Calu3 (cell line): ENCODE measurements at regions of chr11 and their contacts with region 1.

Region 1: DNA sequence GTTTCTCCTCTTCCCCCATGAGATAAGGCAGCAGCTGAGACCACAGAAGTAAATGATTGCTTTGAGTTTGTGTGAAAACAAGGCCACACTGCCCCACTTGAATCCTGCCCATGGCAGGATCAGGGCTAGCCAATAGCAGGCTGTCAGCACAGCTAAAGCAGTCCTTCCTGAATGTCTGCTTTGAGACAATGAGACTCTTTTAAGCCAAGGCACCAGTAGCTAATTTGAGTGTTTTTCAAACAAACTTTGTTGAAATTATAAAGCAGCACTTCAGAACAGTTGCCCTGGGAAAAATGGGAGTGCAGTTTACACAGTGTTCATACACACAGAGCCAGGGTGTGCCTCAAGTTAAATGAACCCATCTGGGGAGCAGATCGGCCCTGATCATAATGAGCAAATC is 103.5 kb upstream of the OR5AK2 start:
- DNase-seq: peak; percentile 79
- H3K4me3 Mint-ChIP-seq: peak overlapping the region; percentile 53
- H3K27ac Mint-ChIP-seq: peak overlapping the region; percentile 98
- H3K4me1 Mint-ChIP-seq: peaks cover 48% of the 10 kb centered on the region
- H3K27me3 Mint-ChIP-seq: no peaks in the 10 kb centered on the region
- CTCF ChIP-seq: no peak

Region 2: DNA sequence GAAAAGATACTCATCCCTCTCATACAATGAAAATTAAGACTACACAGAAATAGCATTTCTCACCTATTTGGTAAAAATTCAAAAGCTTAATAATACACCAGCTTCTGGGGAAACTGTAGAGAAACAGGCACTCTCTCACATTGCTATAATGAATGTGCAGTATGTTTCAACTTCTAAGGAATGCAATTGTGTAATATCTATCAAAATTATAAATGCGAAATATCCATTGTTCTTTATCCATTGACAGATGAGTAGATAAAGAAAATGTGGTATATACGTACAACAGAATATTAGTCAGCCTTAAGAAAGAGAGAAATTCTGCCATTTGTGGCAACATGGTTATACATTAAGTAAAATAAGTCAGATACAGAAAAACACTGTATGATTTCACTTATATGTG is 35.3 kb before region 1 on chr11:
- CTCF ChIA-PET with region 1: interaction called, 3 read pairs
- intact Hi-C with region 1: loop called (anchors 2 kb)
- DNase-seq: no peak
- H3K4me3 Mint-ChIP-seq: no peak overlapping the region
- H3K27ac Mint-ChIP-seq: no peak overlapping the region
- H3K4me1 Mint-ChIP-seq: peaks cover 56% of the 10 kb centered on the region
- H3K27me3 Mint-ChIP-seq: no peaks in the 10 kb centered on the region
- CTCF ChIP-seq: no peak

Region 3: GRCh38 chr11:56910785-56911184 is 25.6 kb after region 1 on chr11:
- CTCF ChIA-PET with region 1: interaction called, 7 read pairs
- intact Hi-C with region 1: loop called (anchors 1 kb)
- DNase-seq: peak; percentile 32
- H3K4me3 Mint-ChIP-seq: peak overlapping the region; percentile 57
- H3K27ac Mint-ChIP-seq: peak overlapping the region; percentile 97
- H3K4me1 Mint-ChIP-seq: peaks cover 37% of the 10 kb centered on the region
- H3K27me3 Mint-ChIP-seq: no peaks in the 10 kb centered on the region
- CTCF ChIP-seq: no peak

Region 4: DNA sequence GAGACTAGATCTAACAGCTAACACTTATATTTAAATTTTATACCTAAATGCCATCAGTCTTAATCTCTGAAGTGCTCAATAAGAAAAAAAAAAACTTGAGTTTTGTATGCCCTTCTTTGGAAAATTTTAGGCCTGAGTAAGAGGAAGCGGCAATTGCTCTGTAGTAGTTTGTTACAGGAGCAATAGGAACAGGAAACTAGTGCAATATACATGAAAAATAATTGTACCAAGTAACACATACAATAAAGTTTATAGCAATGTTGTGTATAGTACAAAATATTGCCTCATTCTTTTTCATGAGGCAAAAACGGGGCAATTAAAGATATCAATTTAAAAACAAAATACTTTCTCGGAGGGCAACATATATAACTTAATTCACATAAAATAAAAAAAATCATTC is 123.2 kb after region 1 on chr11:
- CTCF ChIA-PET with region 1: no interaction called
- intact Hi-C with region 1: no loop called
- DNase-seq: no peak
- H3K4me3 Mint-ChIP-seq: no peak overlapping the region
- H3K27ac Mint-ChIP-seq: no peak overlapping the region
- H3K4me1 Mint-ChIP-seq: peaks cover 11% of the 10 kb centered on the region
- H3K27me3 Mint-ChIP-seq: no peaks in the 10 kb centered on the region
- CTCF ChIP-seq: no peak

Region 5: GRCh38 chr11:57072640-57073039 is 187.5 kb after region 1 on chr11:
- CTCF ChIA-PET with region 1: interaction called, 3 read pairs
- intact Hi-C with region 1: loop called (anchors 10 kb)
- DNase-seq: peak; percentile 17
- H3K4me3 Mint-ChIP-seq: no peak overlapping the region
- H3K27ac Mint-ChIP-seq: peak overlapping the region; percentile 92
- H3K4me1 Mint-ChIP-seq: peaks cover 31% of the 10 kb centered on the region
- H3K27me3 Mint-ChIP-seq: no peaks in the 10 kb centered on the region
- CTCF ChIP-seq: no peak

Region 6: GRCh38 chr11:57751676-57752253 is 866.6 kb after region 1 on chr11 and contains the start of gene BTBD18:
- CTCF ChIA-PET with region 1: no interaction called
- intact Hi-C with region 1: no loop called
- DNase-seq: peak; percentile 54
- H3K4me3 Mint-ChIP-seq: no peak within 1 kb of the TSS
- H3K27ac Mint-ChIP-seq: peak within 1 kb of the TSS; percentile 53
- H3K4me1 Mint-ChIP-seq: peaks cover 21% of the 10 kb centered on the region
- H3K27me3 Mint-ChIP-seq: no peaks in the 10 kb centered on the region
- CTCF ChIP-seq: peak; percentile 54
- total RNA-seq, gene BTBD18: not detected in 2 replicates